Activated CD4-positive, alpha-beta T cell treated with anti-CD3 and anti-CD28 coated beads, Interleukin-2, amount 10 ng/mL, durations not matched to agents 24 days and 14 days (primary cell): ENCODE measurements at regions of chr2 and their contacts with region 1.

Region 1: DNA sequence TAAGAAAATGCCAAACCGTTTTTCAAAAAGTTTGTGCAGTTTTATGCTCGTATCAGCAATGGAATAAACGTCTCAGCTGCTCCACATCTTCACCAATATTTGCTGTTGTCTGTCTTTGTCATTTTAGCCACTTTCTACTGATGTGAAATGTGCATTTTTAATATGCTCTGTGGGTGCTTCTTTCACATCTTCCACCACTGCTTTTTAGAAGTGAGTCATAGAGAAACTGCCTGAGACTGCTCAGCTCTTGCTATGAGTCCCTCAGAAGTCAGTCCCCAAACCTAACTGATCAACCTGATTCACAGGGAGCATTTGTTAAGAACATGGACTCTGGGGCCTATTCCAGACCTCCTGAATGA is 41.0 kb upstream of the EPC2 start:
- DNase-seq: peak; percentile 77
- H3K4me3 Mint-ChIP-seq: no peak overlapping the region
- H3K27ac Mint-ChIP-seq: peak overlapping the region; percentile 93
- H3K4me1 Mint-ChIP-seq: peaks cover 18% of the 10 kb centered on the region
- H3K27me3 Mint-ChIP-seq: peaks cover 8% of the 10 kb centered on the region

Region 2: GRCh38 chr2:147297820-147298219 is 1305.7 kb before region 1 on chr2:
- intact Hi-C with region 1: loop called (anchors 10 kb)
- DNase-seq: peak; percentile 85
- H3K4me3 Mint-ChIP-seq: peak overlapping the region; percentile 34
- H3K27ac Mint-ChIP-seq: peak overlapping the region; percentile 83
- H3K4me1 Mint-ChIP-seq: peaks cover 52% of the 10 kb centered on the region
- H3K27me3 Mint-ChIP-seq: no peaks in the 10 kb centered on the region

Region 3: DNA sequence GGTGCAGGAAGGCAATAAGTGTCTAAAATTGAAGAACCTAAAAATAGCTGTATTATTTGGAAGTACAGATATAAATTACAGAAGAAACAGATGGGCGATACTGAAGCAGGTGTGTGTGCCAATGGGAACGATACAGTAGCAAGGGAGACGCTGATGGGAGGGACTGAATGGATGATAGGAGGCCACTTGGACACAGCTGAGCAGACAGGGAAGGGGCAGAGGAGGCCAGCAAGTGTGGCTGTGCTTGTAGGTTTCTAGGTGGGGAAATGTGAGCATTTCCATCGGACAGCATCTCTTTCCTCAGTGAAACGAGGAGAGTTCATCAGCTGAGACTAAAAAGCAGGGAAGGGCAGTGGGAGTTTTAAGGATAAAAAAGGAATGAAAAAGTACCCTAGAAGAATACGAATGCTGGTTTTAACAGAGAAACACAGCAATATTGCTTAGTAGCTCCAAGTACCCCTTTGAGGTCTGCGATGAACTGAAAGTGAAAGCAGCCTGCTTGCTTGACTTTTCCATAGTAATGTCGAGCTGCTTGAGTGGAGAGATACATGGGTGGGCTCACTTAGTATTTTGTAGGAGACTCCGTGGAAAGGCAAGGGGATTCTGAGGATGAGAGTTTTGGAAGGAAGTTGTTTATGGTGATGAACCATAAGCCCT is 50.7 kb before region 1 on chr2:
- intact Hi-C with region 1: loop called (anchors 1 kb)
- DNase-seq: peak; percentile 88
- H3K4me3 Mint-ChIP-seq: no peak overlapping the region
- H3K27ac Mint-ChIP-seq: no peak overlapping the region
- H3K4me1 Mint-ChIP-seq: peaks cover 6% of the 10 kb centered on the region
- H3K27me3 Mint-ChIP-seq: no peaks in the 10 kb centered on the region

Region 4: DNA sequence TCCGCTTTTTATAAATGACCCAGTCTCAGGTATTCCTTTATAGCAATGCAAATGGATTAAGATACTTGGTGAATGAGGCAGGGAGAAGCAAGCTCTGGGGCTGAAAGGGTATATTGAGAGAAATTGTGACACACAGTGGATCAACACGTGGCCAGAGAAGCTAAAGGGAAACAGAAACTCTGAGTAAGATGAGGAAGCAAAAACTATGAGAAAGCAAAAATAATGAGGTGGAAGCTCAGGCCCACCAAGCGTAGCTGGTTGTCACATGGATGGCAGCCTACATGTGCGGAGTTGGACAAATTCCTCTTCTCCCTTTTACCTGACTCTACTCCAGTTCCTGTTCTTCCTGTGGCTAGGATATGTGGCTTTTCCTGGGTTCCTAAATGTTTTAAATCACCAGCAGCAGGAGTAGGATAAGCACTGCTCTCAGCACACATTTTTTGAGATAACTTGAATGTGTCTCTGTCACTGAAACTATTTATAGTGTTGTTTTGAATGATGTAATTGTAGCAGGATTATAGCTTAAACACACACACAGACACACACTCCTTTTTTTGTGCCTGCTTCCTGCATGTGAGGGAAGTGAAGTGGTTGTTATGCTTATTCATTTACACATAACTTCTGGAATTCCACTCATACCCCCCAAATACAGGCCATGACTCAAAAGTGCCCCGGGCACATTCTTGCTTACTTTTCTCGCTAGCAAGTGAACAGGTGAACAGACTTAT is 10.9 kb after region 1 on chr2:
- intact Hi-C with region 1: loop called (anchors 1 kb)
- DNase-seq: peak; percentile 67
- H3K4me3 Mint-ChIP-seq: peak overlapping the region; percentile 32
- H3K27ac Mint-ChIP-seq: peak overlapping the region; percentile 62
- H3K4me1 Mint-ChIP-seq: peaks cover 13% of the 10 kb centered on the region
- H3K27me3 Mint-ChIP-seq: no peaks in the 10 kb centered on the region

Region 5: GRCh38 chr2:148720501-148721001 is 117.0 kb after region 1 on chr2:
- intact Hi-C with region 1: no loop called
- DNase-seq: no peak
- H3K4me3 Mint-ChIP-seq: no peak overlapping the region
- H3K27ac Mint-ChIP-seq: peak overlapping the region; percentile 35
- H3K4me1 Mint-ChIP-seq: peaks cover 65% of the 10 kb centered on the region
- H3K27me3 Mint-ChIP-seq: no peaks in the 10 kb centered on the region

Region 6: GRCh38 chr2:148874868-148875341 is 271.4 kb after region 1 on chr2 and contains the start of gene KIF5C:
- intact Hi-C with region 1: loop called (anchors 5 kb)
- DNase-seq: peak; percentile 94
- H3K4me3 Mint-ChIP-seq: peak within 1 kb of the TSS; percentile 91
- H3K27ac Mint-ChIP-seq: peak within 1 kb of the TSS; percentile 86
- H3K4me1 Mint-ChIP-seq: peaks cover 14% of the 10 kb centered on the region
- H3K27me3 Mint-ChIP-seq: peaks cover 26% of the 10 kb centered on the region
- total RNA-seq, gene KIF5C: 16.9 and 20.0 TPM in 2 replicates